Activated T-helper 2 cell treated with anti-CD3 and anti-CD28 coated beads, Interferon-gamma antibody, Interleukin-2, Interleukin-4, amounts not matched to agents 10 μg/mL and 5 μg/mL and 100 μg/mL, durations not matched to agents 14 hours and 24 hours and 36 hours (primary cell): ENCODE measurements at regions of chr6 and their contacts with region 1.

Region 1: DNA sequence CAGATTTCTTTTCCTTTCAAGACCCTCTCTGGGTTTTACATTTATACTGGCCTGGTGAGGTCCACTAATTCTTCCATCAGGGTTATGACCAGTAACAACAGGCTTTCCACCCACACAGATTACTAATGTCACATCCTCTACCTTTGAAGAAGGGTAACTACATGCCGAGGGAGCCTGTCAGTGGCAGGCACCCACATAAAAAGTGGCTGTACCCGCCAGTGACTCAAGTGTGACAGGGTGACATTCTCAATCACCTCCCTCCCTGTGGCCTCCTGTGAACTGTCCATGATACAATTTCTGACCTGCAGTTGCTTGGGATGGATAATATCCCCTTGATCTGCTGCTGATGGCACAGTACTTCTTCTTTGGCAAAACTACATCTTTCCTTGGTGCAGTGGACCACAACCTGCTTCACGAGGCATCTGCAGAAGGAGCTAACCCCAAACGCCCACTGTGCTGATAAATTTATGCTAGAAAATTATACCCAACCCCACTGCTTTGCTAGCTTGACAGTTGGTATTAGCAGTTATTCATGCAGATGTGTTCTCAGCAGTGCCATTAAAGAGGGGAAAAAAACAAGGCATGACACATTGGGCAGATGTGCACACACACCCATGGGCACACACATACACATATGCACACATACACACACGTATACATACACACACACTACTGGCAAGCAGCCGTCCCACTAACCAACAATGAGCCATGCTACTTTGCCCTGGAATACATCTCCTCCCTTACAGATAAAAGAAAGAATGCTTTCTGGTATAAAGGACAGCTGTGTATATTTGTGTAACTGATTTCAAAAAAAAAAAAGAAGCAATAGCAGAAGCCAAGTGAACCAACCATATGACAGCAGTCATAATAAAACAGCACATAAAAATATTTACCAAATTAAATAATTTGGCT is 20.8 kb downstream of the GFOD1 start:
- DNase-seq: no peak
- H3K4me3 Mint-ChIP-seq: peak overlapping the region; percentile 11
- H3K27ac Mint-ChIP-seq: peak overlapping the region; percentile 85
- H3K4me1 Mint-ChIP-seq: peaks cover 62% of the 10 kb centered on the region
- H3K27me3 Mint-ChIP-seq: no peaks in the 10 kb centered on the region

Region 2: DNA sequence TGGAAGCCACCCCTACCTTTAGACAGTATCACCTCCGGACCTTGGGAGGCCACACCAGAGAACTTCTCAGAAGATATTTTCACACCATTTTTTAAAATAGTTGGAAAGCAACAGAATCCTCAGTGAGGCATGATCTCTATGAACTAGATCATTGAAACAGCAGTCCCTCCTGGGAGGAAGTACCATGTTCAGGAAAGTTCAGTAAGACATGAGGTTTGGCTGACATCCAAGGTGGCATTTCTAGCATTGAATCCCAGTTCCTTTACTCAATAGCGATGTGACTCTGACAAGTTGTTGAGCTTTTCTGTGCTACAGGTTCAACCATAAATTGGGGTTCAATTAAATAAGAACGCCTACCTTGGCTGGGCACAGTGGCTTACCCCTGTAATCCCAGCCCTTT is 307.3 kb before region 1 on chr6:
- intact Hi-C with region 1: no loop called
- DNase-seq: no peak
- H3K4me3 Mint-ChIP-seq: no peak overlapping the region
- H3K27ac Mint-ChIP-seq: no peak overlapping the region
- H3K4me1 Mint-ChIP-seq: peaks cover 2% of the 10 kb centered on the region
- H3K27me3 Mint-ChIP-seq: peaks cover 11% of the 10 kb centered on the region

Region 3: DNA sequence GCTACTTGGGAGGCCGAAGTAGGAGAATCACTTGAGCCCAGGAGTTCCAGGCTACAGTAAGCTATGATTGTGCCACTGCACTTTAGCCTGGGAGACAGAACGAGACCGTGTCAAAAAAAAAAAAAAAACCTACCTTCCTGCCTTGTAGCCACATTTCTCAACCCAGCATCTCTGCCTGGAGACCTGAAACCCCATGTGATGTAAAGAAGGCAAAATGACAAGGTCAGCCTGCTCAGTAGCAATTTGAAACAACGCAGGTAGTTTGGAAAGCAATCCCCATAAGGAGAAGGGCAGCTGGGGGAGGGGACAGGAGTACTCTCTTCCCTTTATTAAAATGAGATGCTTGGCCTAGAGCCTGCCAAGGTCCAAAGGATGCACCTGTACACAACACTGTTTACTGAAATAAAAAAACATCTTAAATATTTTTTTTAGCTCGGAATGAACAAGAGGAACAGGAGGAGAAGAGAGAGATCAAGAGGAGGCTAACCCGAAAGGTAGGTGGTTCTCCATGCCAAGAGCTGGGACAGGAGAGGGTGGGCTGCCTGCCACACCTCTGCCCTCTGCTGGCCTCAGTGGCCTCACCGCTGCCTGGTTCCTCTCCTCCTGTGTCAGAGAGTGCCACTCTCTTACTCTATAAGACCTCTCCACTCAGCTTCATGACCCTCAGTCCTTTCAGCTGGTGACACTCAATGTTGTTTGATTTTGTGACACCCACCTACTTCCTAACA is 188.6 kb before region 1 on chr6:
- intact Hi-C with region 1: no loop called
- DNase-seq: no peak
- H3K4me3 Mint-ChIP-seq: no peak overlapping the region
- H3K27ac Mint-ChIP-seq: no peak overlapping the region
- H3K4me1 Mint-ChIP-seq: peaks cover 20% of the 10 kb centered on the region
- H3K27me3 Mint-ChIP-seq: no peaks in the 10 kb centered on the region

Region 4: DNA sequence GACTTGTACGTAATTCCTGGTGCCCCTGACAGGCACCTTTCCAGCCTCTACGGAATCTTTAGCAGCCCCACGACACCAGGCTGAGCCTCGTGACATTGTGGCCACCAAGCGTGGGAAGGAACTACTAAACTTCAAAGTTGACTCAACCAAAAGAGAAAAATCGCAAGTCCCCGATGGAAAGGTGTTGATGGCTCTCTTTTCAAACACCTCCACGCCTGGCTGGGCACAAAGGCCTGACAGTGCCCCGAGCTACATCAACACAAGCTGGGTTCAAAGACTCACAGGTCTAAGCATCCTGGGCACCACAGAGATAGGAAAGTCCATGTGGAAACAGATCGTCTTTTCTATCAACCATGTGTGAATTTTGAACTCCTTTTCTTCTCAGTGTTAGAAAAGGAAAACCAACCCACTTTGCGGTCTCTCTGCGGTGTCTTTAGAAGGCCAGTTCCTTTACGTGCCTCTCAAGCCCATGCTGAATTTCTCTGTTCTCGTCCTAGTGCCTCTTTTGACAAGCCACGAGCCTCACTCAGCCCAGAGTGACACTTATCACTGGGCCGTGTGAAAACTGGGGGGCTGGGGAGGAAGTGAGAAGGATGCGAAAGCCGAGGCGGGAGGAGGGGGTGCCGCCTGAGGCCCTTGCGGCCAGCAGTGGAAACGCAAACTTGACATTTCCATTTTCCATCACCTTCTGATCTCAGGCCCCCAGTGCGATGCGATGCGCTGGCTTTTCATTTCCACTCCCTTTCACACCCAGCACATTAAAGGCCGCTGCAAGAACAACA is 38.6 kb before region 1 on chr6:
- intact Hi-C with region 1: loop called (anchors 1 kb)
- DNase-seq: peak; percentile 64
- H3K4me3 Mint-ChIP-seq: peak overlapping the region; percentile 27
- H3K27ac Mint-ChIP-seq: peak overlapping the region; percentile 84
- H3K4me1 Mint-ChIP-seq: peaks cover 71% of the 10 kb centered on the region
- H3K27me3 Mint-ChIP-seq: no peaks in the 10 kb centered on the region

Region 5: GRCh38 chr6:13445005-13445743 is 21.4 kb before region 1 on chr6:
- intact Hi-C with region 1: no loop called
- DNase-seq: no peak
- H3K4me3 Mint-ChIP-seq: no peak overlapping the region
- H3K27ac Mint-ChIP-seq: no peak overlapping the region
- H3K4me1 Mint-ChIP-seq: peaks cover 25% of the 10 kb centered on the region
- H3K27me3 Mint-ChIP-seq: no peaks in the 10 kb centered on the region